ENCODE measurements at regions of chr18 and their contacts with region 1.

Region 1: DNA sequence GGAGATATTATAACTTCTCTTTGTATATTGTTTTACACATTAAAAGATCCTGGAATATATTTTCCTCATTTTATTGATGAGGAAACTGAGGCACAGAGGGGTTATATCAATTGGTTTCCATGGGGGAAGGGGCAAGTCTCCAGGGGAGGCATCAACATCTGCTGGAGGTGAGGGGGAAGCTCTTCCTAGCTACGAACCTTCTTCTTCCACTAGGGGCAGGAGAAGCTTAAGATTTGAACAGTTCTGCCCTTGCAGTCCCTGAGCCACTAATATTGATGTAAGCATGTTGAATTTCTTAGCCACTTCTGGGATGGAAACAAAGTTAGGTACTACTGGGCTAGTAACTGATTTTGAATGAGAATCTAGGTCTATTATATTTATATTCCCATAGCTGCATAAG is 140.1 kb upstream of the AQP4 start:
- DNase-seq: no peak
- ATAC-seq: peak; percentile 85
- H3K4me3 ChIP-seq: no peak overlapping the region
- H3K27ac ChIP-seq: no peak overlapping the region
- H3K4me1 ChIP-seq: no peaks in the 10 kb centered on the region
- H3K27me3 ChIP-seq: peaks cover 5% of the 10 kb centered on the region; the same call in 1 of the 2 replicates
- CTCF ChIP-seq: peak; percentile 77

Region 2: GRCh38 chr18:26813043-26813442 is 192.5 kb before region 1 on chr18:
- CTCF ChIA-PET with region 1: no interaction called
- POLR2A ChIA-PET with region 1: no interaction called
- in situ Hi-C with region 1: no loop called
- intact Hi-C with region 1: loop called (anchors 2 kb)
- DNase-seq: peak; percentile 46
- ATAC-seq: peak; percentile 85
- H3K4me3 ChIP-seq: no peak overlapping the region
- H3K27ac ChIP-seq: no peak overlapping the region
- H3K4me1 ChIP-seq: no peaks in the 10 kb centered on the region
- H3K27me3 ChIP-seq: no peaks in the 10 kb centered on the region
- CTCF ChIP-seq: peak; percentile 72

Measured in Panc1 (cell line).